ENCODE measurements at regions of chr9 and their contacts with region 1.

Region 1: DNA sequence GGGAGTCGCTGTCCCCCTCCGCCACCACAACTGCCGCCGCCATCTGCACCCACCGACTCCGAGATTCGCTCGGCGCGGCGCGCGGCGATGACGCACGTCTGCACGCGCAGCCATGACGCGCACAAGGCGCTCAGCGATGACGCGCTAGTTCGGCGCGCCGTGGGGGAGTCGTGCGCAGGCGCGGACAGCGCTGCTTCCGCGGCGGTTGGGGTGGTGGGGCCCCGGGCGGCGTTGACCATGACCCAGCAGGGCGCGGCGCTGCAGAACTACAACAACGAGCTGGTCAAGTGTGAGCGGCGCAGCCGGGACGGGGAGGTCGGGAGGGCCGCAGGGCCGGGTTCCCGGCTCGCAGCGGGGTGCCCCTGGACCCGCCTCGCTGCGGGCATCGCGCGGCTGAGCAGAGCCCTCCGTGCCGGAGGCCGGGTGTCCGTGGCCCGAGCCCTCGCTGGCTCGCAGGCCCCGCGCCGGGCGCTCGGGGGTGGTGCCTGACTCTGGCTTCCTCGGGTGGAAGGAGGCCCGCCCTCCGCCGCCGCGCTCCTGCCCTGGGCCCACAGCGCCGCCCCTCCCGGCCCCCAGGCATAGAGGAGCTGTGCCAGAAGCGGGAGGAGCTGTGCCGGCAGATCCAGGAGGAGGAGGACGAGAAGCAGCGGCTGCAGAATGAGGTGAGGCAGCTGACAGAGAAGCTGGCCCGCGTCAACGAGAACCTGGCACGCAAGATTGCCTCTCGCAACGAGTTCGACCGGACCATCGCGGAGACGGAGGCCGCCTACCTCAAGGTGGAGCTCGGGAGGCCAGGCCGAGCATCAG is at the starts of genes ANAPC2 and SSNA1:
- DNase-seq: peak; percentile 90 to 96
- ATAC-seq: peak; percentile 88 to 95 (median 91)
- H3K4me3 ChIP-seq: peak within 1 kb of the TSS; percentile 75 to 99 (median 98)
- H3K27ac ChIP-seq: peak within 1 kb of the TSS; percentile 94 to 100 (median 98)
- H3K4me1 ChIP-seq: peaks cover 28 to 62% (median 47%) of the 10 kb centered on the region in 9 donors
- H3K27me3 ChIP-seq: no peaks in the 10 kb centered on the region
- CTCF ChIP-seq: peak in 6 of 9 donors; percentile 9 to 52 (median 39)
- total RNA-seq, gene ANAPC2: 24.6 to 44.8 (median 27.7) TPM
- total RNA-seq, gene SSNA1: 47.3 to 73.5 (median 56.7) TPM

Region 2: DNA sequence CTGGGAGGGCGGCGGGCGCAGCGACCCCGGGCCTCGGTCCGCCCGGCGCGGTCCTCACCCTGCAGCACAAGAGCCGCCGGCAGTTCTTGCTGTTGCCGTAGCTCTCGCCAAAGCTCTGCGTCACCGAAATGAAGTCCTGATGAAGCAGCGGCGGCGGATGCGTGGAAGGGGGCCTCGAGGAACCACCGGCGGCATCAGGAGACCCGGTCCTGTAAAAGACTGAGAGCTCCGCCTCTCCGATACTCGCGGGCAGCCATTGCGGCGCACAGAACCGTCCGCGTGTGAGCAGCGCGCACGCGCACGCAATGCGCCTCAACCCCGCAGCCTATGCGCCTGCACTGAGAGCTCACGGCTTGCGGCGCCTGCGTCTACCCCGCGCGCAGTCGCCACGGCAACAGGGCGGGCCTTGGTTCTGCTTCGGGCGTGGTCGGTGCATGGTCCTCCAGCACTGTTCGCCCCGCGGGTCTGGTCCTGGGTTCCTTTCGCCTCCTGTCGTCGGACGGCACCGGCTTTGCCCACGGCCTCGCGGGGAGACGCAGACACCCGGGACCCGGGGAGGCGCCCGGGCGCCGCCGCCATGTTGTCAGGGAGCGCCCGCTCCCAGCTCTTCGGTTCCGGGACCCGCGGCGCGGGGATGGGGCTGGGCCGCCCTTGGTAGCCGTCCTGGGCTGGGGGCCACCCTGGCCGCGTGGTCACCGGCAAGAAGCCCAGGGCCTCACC is 59.1 kb before region 1 on chr9:
- intact Hi-C with region 1: loop called in 2 of 10 experiments (anchors 10 kb)
- DNase-seq: peak; percentile 85 to 90
- ATAC-seq: peak; percentile 98 to 100 (median 99)
- H3K4me3 ChIP-seq: peak overlapping the region; percentile 50 to 94 (median 82)
- H3K27ac ChIP-seq: peak overlapping the region in 9 of 10 donors; percentile 67 to 87 (median 82)
- H3K4me1 ChIP-seq: peaks cover 9 to 42% (median 28%) of the 10 kb centered on the region in 9 donors
- H3K27me3 ChIP-seq: peaks cover 0 to 38% (median 20%) of the 10 kb centered on the region in 7 donors
- CTCF ChIP-seq: no peak